ENCODE measurements at regions of chr18 and their contacts with region 1.

Region 1: GRCh38 chr18:74081966-74082741 is 65.5 kb downstream of the FBXO15 start:
- DNase-seq: peak; percentile 84
- ATAC-seq: peak; percentile 100
- H3K4me3 Mint-ChIP-seq: peak overlapping the region; percentile 72
- H3K27ac Mint-ChIP-seq: peak overlapping the region; percentile 93
- H3K4me1 Mint-ChIP-seq: peaks cover 19% of the 10 kb centered on the region
- H3K27me3 Mint-ChIP-seq: peaks cover 2% of the 10 kb centered on the region

Region 2: GRCh38 chr18:74040459-74041332 is 41.5 kb before region 1 on chr18:
- CTCF ChIA-PET with region 1: interaction called, 18 read pairs
- POLR2A ChIA-PET with region 1: interaction called, 4 read pairs
- DNase-seq: peak; percentile 62
- ATAC-seq: peak; percentile 75
- H3K4me3 Mint-ChIP-seq: no peak overlapping the region
- H3K27ac Mint-ChIP-seq: no peak overlapping the region
- H3K4me1 Mint-ChIP-seq: no peaks in the 10 kb centered on the region
- H3K27me3 Mint-ChIP-seq: no peaks in the 10 kb centered on the region

Region 3: GRCh38 chr18:74097598-74098202 is 15.5 kb after region 1 on chr18:
- CTCF ChIA-PET with region 1: interaction called, 19 read pairs
- POLR2A ChIA-PET with region 1: no interaction called
- DNase-seq: no peak
- ATAC-seq: no peak
- H3K4me3 Mint-ChIP-seq: no peak overlapping the region
- H3K27ac Mint-ChIP-seq: no peak overlapping the region
- H3K4me1 Mint-ChIP-seq: peaks cover 5% of the 10 kb centered on the region
- H3K27me3 Mint-ChIP-seq: no peaks in the 10 kb centered on the region

Region 4: GRCh38 chr18:74116633-74117554 is 34.7 kb after region 1 on chr18:
- CTCF ChIA-PET with region 1: interaction called, 114 read pairs
- POLR2A ChIA-PET with region 1: interaction called, 8 read pairs
- DNase-seq: peak; percentile 47
- ATAC-seq: no peak
- H3K4me3 Mint-ChIP-seq: no peak overlapping the region
- H3K27ac Mint-ChIP-seq: no peak overlapping the region
- H3K4me1 Mint-ChIP-seq: peaks cover 7% of the 10 kb centered on the region
- H3K27me3 Mint-ChIP-seq: no peaks in the 10 kb centered on the region

Region 5: GRCh38 chr18:74132201-74132600 is 50.0 kb after region 1 on chr18:
- CTCF ChIA-PET with region 1: no interaction called
- POLR2A ChIA-PET with region 1: no interaction called
- DNase-seq: no peak
- ATAC-seq: no peak
- H3K4me3 Mint-ChIP-seq: no peak overlapping the region
- H3K27ac Mint-ChIP-seq: no peak overlapping the region
- H3K4me1 Mint-ChIP-seq: no peaks in the 10 kb centered on the region
- H3K27me3 Mint-ChIP-seq: peaks cover 2% of the 10 kb centered on the region

Region 6: GRCh38 chr18:74342416-74343043 is 260.4 kb after region 1 on chr18:
- CTCF ChIA-PET with region 1: interaction called, 18 read pairs
- POLR2A ChIA-PET with region 1: no interaction called
- DNase-seq: peak; percentile 58
- ATAC-seq: no peak
- H3K4me3 Mint-ChIP-seq: no peak overlapping the region
- H3K27ac Mint-ChIP-seq: no peak overlapping the region
- H3K4me1 Mint-ChIP-seq: no peaks in the 10 kb centered on the region
- H3K27me3 Mint-ChIP-seq: peaks cover 27% of the 10 kb centered on the region